ENCODE measurements at regions of chr1 and their contacts with region 1.

Region 1: GRCh38 chr1:111507411-111508201 is 4.2 kb upstream of the ADORA3 start:
- DNase-seq: no peak
- H3K4me3 ChIP-seq: peak overlapping the region; percentile 38 to 48
- H3K27ac ChIP-seq: peak overlapping the region; percentile 94
- H3K4me1 ChIP-seq: peaks cover 31% of the 10 kb centered on the region
- H3K27me3 ChIP-seq: no peaks in the 10 kb centered on the region
- CTCF ChIP-seq: no peak
- POLR2A ChIP-seq: no peak

Region 2: DNA sequence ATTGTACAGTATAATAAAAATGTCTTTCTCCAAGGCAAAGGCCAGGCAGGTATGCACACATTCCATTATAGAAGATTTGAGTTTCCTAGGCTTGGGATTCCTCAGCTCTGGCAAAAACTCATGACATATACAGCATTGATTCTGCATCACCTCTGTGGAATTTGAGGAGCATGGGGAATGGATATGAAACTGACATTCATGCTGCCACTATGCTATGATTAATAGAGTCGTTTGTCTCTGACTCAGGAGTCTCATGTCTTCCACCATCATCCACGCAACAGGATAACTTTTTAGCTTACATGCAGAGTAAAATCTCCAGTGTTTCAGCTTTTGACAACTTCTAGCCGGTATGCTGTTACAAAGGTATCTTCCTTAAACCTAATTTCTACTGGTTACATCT is 45.6 kb after region 1 on chr1:
- intact Hi-C with region 1: no loop called
- DNase-seq: no peak
- H3K4me3 ChIP-seq: no peak overlapping the region
- H3K27ac ChIP-seq: no peak overlapping the region
- H3K4me1 ChIP-seq: no peaks in the 10 kb centered on the region
- H3K27me3 ChIP-seq: no peaks in the 10 kb centered on the region
- CTCF ChIP-seq: no peak
- POLR2A ChIP-seq: no peak

Region 3: DNA sequence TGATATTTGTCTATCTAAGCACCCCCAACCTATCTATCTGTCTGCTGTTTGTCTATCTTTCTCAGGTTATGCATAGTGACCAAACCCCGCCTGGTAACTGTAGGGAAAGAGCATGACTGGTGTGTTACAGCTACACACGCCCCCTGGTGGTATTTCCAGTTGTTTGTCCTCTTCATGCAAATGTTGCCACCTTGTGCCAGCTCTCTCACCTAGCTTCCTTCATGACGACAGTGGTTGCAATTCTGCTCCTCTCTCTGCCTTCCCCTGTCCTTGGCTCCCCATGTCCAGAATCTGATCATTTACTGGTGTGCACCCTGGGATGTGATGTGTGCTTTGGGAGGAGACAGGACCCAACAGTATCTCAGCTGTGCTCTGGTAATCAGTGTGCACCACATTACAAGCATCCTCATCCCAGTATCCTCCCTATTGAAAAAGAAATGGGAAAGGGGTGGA is 239.7 kb after region 1 on chr1:
- intact Hi-C with region 1: loop called (anchors 10 kb)
- DNase-seq: peak in 1 of 2 donors; percentile 83
- H3K4me3 ChIP-seq: no peak overlapping the region
- H3K27ac ChIP-seq: no peak overlapping the region
- H3K4me1 ChIP-seq: no peaks in the 10 kb centered on the region
- H3K27me3 ChIP-seq: no peaks in the 10 kb centered on the region
- CTCF ChIP-seq: peak; percentile 41 to 58 (median 46)
- POLR2A ChIP-seq: no peak